ENCODE measurements at regions of chr17 and their contacts with region 1.

Region 1: GRCh38 chr17:41548844-41549595 is 20.9 kb upstream of the KRT19 start:
- DNase-seq: peak; percentile 91
- ATAC-seq: peak; percentile 86
- H3K4me3 Mint-ChIP-seq: no peak overlapping the region
- H3K27ac Mint-ChIP-seq: peak overlapping the region; percentile 47
- H3K4me1 Mint-ChIP-seq: peaks cover 17% of the 10 kb centered on the region
- H3K27me3 Mint-ChIP-seq: peaks cover 7% of the 10 kb centered on the region

Region 2: GRCh38 chr17:40857535-40857934 is 691.5 kb before region 1 on chr17:
- CTCF ChIA-PET with region 1: interaction called, 17 read pairs
- DNase-seq: no peak
- ATAC-seq: no peak
- H3K4me3 Mint-ChIP-seq: no peak overlapping the region
- H3K27ac Mint-ChIP-seq: no peak overlapping the region
- H3K4me1 Mint-ChIP-seq: no peaks in the 10 kb centered on the region
- H3K27me3 Mint-ChIP-seq: peaks cover 27% of the 10 kb centered on the region

Region 3: GRCh38 chr17:41338961-41339485 is 210.0 kb before region 1 on chr17:
- CTCF ChIA-PET with region 1: interaction called, 10 read pairs
- DNase-seq: peak; percentile 46
- ATAC-seq: peak; percentile 41
- H3K4me3 Mint-ChIP-seq: no peak overlapping the region
- H3K27ac Mint-ChIP-seq: peak overlapping the region; percentile 56
- H3K4me1 Mint-ChIP-seq: peaks cover 51% of the 10 kb centered on the region
- H3K27me3 Mint-ChIP-seq: peaks cover 2% of the 10 kb centered on the region

Region 4: GRCh38 chr17:41446806-41447205 is 102.2 kb before region 1 on chr17:
- CTCF ChIA-PET with region 1: no interaction called
- DNase-seq: no peak
- ATAC-seq: no peak
- H3K4me3 Mint-ChIP-seq: no peak overlapping the region
- H3K27ac Mint-ChIP-seq: no peak overlapping the region
- H3K4me1 Mint-ChIP-seq: no peaks in the 10 kb centered on the region
- H3K27me3 Mint-ChIP-seq: peaks cover 28% of the 10 kb centered on the region

Region 5: DNA sequence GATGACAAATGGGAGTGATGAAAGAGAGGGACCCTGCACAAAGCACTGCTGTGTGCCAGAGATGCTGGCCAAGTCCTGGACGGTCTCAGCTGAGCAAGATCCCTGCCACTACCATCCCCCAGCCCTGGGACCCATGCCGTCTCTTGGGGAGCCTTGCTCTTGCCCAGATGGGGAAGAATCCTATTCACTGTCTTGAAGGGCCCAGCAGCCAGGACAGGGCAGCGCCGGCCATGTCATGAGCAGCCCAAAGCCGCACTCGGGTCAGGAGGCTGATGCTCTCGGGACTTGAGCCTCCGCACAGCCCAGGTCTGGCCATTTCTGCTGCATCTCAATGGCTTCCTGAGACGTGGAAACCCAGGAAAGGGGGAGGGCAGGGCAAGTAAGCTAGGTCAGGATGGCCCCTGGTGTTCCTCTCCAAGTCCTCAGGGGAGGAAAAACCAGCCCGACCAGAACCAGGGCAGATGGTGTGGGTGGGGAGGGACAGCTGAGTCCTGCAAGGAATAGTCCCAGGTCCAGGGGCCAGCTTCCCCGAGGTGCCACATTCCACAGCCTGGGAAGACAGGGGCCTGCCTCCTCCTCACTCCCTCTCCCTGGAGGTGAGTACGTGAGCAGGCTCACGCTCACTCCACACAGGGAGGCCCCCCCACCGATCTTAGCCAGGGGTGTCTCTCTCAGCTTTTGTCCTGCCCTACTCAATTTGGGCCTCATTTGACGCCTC is 13.1 kb before region 1 on chr17:
- CTCF ChIA-PET with region 1: interaction called, 23 read pairs
- DNase-seq: no peak
- ATAC-seq: no peak
- H3K4me3 Mint-ChIP-seq: no peak overlapping the region
- H3K27ac Mint-ChIP-seq: no peak overlapping the region
- H3K4me1 Mint-ChIP-seq: no peaks in the 10 kb centered on the region
- H3K27me3 Mint-ChIP-seq: peaks cover 30% of the 10 kb centered on the region

Region 6: GRCh38 chr17:41579484-41580243 is 30.6 kb after region 1 on chr17:
- CTCF ChIA-PET with region 1: interaction called, 24 read pairs
- DNase-seq: peak; percentile 85
- ATAC-seq: peak; percentile 95
- H3K4me3 Mint-ChIP-seq: no peak overlapping the region
- H3K27ac Mint-ChIP-seq: no peak overlapping the region
- H3K4me1 Mint-ChIP-seq: no peaks in the 10 kb centered on the region
- H3K27me3 Mint-ChIP-seq: peaks cover 41% of the 10 kb centered on the region

Region 7: GRCh38 chr17:41665566-41666236 is 116.7 kb after region 1 on chr17:
- CTCF ChIA-PET with region 1: interaction called, 256 read pairs
- DNase-seq: peak; percentile 92
- ATAC-seq: peak; percentile 89
- H3K4me3 Mint-ChIP-seq: peak overlapping the region; percentile 71
- H3K27ac Mint-ChIP-seq: peak overlapping the region; percentile 94
- H3K4me1 Mint-ChIP-seq: peaks cover 45% of the 10 kb centered on the region
- H3K27me3 Mint-ChIP-seq: peaks cover 13% of the 10 kb centered on the region